ENCODE measurements at regions of chr16 and their contacts with region 1.

Region 1: GRCh38 chr16:12988071-12988470 is 86.7 kb downstream of the SHISA9 start:
- DNase-seq: no peak
- ATAC-seq: no peak
- H3K4me3 Mint-ChIP-seq: no peak overlapping the region
- H3K27ac Mint-ChIP-seq: no peak overlapping the region
- H3K4me1 Mint-ChIP-seq: no peaks in the 10 kb centered on the region
- H3K27me3 Mint-ChIP-seq: no peaks in the 10 kb centered on the region

Region 2: DNA sequence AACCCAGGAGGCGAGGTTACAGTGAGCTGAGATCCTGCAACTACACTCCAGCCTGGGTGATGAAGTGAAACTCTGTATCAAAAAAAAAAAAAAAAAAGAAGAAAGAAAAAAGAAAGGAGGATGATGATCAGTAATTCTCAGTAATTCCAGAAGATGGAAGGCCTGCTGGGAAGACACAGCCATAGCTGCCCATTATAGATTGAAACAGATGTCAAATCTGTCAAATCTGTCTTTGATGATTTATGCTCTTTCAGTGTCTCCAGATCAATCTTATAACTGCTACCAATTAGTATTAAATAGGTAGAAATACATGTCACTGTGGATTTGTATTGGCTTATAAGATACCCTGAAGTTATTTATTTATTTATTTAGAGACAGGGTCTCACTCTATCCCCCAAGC is 141.5 kb before region 1 on chr16:
- POLR2A ChIA-PET with region 1: interaction called, 10 read pairs
- DNase-seq: no peak
- ATAC-seq: no peak
- H3K4me3 Mint-ChIP-seq: no peak overlapping the region
- H3K27ac Mint-ChIP-seq: no peak overlapping the region
- H3K4me1 Mint-ChIP-seq: no peaks in the 10 kb centered on the region
- H3K27me3 Mint-ChIP-seq: peaks cover 14% of the 10 kb centered on the region

Region 3: GRCh38 chr16:12951392-12951791 is 36.7 kb before region 1 on chr16:
- POLR2A ChIA-PET with region 1: no interaction called
- DNase-seq: no peak
- ATAC-seq: no peak
- H3K4me3 Mint-ChIP-seq: no peak overlapping the region
- H3K27ac Mint-ChIP-seq: no peak overlapping the region
- H3K4me1 Mint-ChIP-seq: no peaks in the 10 kb centered on the region
- H3K27me3 Mint-ChIP-seq: no peaks in the 10 kb centered on the region

Region 4: GRCh38 chr16:13012601-13013000 is 24.5 kb after region 1 on chr16:
- POLR2A ChIA-PET with region 1: no interaction called
- DNase-seq: no peak
- ATAC-seq: no peak
- H3K4me3 Mint-ChIP-seq: no peak overlapping the region
- H3K27ac Mint-ChIP-seq: no peak overlapping the region
- H3K4me1 Mint-ChIP-seq: no peaks in the 10 kb centered on the region
- H3K27me3 Mint-ChIP-seq: no peaks in the 10 kb centered on the region

Measured in activated naive CD8-positive, alpha-beta T cell treated with anti-CD3 and anti-CD28 coated beads, Interleukin-2, amount 10 ng/mL, durations not matched to agents 7 days and 5 days (primary cell).